ENCODE measurements at regions of chrX and their contacts with region 1.

Region 1: DNA sequence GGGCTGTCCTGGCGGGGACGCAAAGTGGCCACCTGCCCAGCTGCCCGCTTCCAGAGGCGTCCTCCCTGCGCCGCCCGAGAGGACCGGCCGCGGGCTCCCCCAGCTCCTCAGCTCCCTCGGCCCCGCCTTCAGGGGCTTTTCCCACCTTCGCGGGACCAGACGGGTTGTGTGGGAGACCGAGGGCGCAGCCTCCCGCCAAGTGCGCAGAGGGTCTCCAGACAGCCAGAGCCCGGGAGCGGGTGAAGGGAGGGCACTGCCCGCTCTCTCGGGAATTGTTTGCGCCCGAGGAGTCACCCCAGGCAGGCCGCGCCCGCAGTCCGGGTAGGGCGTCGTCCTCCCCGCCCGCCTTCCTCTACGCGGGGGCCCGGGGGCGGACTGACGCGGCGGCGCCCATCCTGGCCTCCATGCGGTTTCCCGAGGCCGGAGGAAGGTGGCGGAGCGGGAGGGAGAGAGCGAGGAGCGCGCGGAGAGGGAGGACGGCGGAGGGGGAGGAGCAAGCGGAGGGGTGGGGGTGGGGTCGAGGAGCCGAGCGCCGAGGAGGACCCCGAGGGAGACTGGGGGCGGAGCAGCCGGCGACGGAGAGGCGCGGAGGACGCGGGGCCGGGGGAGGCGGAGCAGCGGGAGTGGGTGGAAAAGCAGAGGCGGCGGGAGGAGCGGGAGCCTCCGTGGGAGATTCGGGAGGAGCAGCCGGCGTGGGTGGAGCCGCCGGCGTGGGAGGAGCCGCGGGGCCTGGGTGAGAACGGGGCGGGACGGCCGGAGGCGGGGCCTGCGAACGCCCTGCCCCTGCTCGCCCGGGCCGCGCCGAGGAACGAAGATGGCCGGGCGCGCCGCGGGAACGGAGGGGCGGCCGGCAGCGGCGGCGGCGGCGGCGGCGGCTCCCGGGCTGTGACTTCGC is 47.6 kb downstream of the CLDN34 start:
- DNase-seq: peak; percentile 49 to 88 (median 73)
- ATAC-seq: peak; percentile 92
- H3K4me3 ChIP-seq: peak overlapping the region; percentile 49 to 61
- H3K4me3 Mint-ChIP-seq: peak overlapping the region; percentile 71
- H3K27ac ChIP-seq: peak overlapping the region in 1 of 2 experiments; percentile 39
- H3K27ac Mint-ChIP-seq: no peak overlapping the region
- H3K4me1 ChIP-seq: peaks cover 13% of the 10 kb centered on the region
- H3K4me1 Mint-ChIP-seq: peaks cover 34% of the 10 kb centered on the region
- H3K27me3 ChIP-seq: no peaks in the 10 kb centered on the region
- H3K27me3 Mint-ChIP-seq: no peaks in the 10 kb centered on the region
- CTCF ChIP-seq: no peak

Region 2: DNA sequence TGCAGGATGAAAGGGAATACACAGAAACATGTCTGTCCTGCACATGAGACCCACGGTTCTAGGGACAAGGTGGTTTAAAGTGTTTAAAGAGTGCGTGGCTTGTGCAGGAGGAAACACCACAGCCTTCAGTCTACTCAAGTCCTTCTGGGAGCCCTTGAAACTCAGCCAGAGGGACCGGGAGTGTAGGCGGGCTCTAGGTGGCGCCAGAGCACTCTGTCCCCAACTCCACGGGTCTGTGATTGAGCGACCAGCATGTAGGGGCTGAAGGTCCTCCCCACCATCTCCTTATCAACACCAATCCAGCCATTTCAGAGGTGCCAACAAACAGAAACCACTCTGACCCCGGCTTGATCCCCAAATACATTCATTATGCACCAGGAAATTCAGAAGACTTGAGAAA is 129.6 kb before region 1 on chrX:
- CTCF ChIA-PET with region 1: no interaction called
- POLR2A ChIA-PET with region 1: no interaction called
- intact Hi-C with region 1: no loop called
- DNase-seq: peak in 8 of 9 experiments; percentile 2 to 59 (median 33)
- ATAC-seq: no peak
- H3K4me3 ChIP-seq: no peak overlapping the region
- H3K4me3 Mint-ChIP-seq: no peak overlapping the region
- H3K27ac ChIP-seq: no peak overlapping the region
- H3K27ac Mint-ChIP-seq: no peak overlapping the region
- H3K4me1 ChIP-seq: no peaks in the 10 kb centered on the region
- H3K4me1 Mint-ChIP-seq: no peaks in the 10 kb centered on the region
- H3K27me3 ChIP-seq: no peaks in the 10 kb centered on the region
- H3K27me3 Mint-ChIP-seq: peaks cover 5% of the 10 kb centered on the region
- CTCF ChIP-seq: no peak

Region 3: DNA sequence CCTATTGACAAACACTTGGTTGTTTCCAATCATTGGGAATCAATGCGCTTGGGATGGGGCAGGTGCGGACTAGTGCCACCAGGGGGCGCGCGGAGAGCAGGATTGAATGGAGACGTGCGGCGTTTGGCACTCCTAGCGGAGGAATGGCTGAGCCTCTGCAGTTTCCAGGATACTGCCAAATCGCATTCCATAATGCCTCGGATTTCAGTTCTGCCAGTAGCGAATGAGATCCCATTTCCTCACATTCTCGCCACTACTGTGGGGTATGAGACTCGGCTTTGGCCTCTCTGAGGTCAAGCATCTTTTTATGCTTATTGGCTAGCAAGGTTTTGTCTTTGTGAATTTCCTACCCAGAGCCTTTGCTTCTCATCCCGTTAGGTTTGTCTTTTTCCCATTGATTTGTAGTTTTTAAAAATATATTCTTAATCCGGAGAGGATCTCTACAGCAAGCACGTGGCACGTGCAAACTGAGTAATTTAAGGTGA is 18.8 kb before region 1 on chrX:
- CTCF ChIA-PET with region 1: interaction called, 4 read pairs
- POLR2A ChIA-PET with region 1: no interaction called
- intact Hi-C with region 1: loop called in 1 of 2 experiments (anchors 1 kb)
- DNase-seq: peak; percentile 35 to 87 (median 77)
- ATAC-seq: peak; percentile 84
- H3K4me3 ChIP-seq: no peak overlapping the region
- H3K4me3 Mint-ChIP-seq: no peak overlapping the region
- H3K27ac ChIP-seq: no peak overlapping the region
- H3K27ac Mint-ChIP-seq: no peak overlapping the region
- H3K4me1 ChIP-seq: no peaks in the 10 kb centered on the region
- H3K4me1 Mint-ChIP-seq: no peaks in the 10 kb centered on the region
- H3K27me3 ChIP-seq: no peaks in the 10 kb centered on the region
- H3K27me3 Mint-ChIP-seq: no peaks in the 10 kb centered on the region
- CTCF ChIP-seq: peak; percentile 92

Region 4: DNA sequence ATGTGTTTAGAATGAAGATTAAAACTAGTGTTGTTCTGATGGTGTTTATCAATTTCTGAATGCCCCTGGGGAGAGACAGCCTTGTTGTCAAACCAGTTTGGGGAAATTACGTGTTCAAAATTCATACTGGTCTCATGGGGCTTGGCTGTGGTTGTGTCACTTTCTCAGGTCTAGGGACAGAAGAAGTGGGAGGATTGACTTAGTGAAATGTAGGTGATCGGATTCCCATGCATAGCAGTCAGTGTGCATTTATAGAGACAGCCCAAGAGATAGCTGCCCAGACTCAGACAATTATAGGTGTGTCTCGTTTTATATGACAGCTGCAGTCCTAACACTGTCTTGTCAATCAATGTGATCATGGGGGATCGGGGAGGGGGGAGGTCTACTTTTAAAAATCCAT is 47.6 kb after region 1 on chrX:
- CTCF ChIA-PET with region 1: no interaction called
- POLR2A ChIA-PET with region 1: no interaction called
- intact Hi-C with region 1: loop called in 1 of 2 experiments (anchors 5 kb)
- DNase-seq: no peak
- ATAC-seq: no peak
- H3K4me3 ChIP-seq: no peak overlapping the region
- H3K4me3 Mint-ChIP-seq: no peak overlapping the region
- H3K27ac ChIP-seq: no peak overlapping the region
- H3K27ac Mint-ChIP-seq: no peak overlapping the region
- H3K4me1 ChIP-seq: no peaks in the 10 kb centered on the region
- H3K4me1 Mint-ChIP-seq: peaks cover 12% of the 10 kb centered on the region
- H3K27me3 ChIP-seq: no peaks in the 10 kb centered on the region
- H3K27me3 Mint-ChIP-seq: no peaks in the 10 kb centered on the region
- CTCF ChIP-seq: no peak

Region 5: GRCh38 chrX:10098270-10098713 is 83.6 kb after region 1 on chrX:
- CTCF ChIA-PET with region 1: interaction called, 3 read pairs
- POLR2A ChIA-PET with region 1: no interaction called
- intact Hi-C with region 1: loop called in 1 of 2 experiments (anchors 5 kb)
- DNase-seq: peak in 7 of 9 experiments; percentile 29 to 77 (median 55)
- ATAC-seq: peak; percentile 86
- H3K4me3 ChIP-seq: peak overlapping the region; percentile 61 to 76
- H3K4me3 Mint-ChIP-seq: peak overlapping the region; percentile 94
- H3K27ac ChIP-seq: peak overlapping the region; percentile 78 to 83
- H3K27ac Mint-ChIP-seq: peak overlapping the region; percentile 97
- H3K4me1 ChIP-seq: peaks cover 18% of the 10 kb centered on the region
- H3K4me1 Mint-ChIP-seq: peaks cover 55% of the 10 kb centered on the region
- H3K27me3 ChIP-seq: no peaks in the 10 kb centered on the region
- H3K27me3 Mint-ChIP-seq: no peaks in the 10 kb centered on the region
- CTCF ChIP-seq: no peak

Region 6: DNA sequence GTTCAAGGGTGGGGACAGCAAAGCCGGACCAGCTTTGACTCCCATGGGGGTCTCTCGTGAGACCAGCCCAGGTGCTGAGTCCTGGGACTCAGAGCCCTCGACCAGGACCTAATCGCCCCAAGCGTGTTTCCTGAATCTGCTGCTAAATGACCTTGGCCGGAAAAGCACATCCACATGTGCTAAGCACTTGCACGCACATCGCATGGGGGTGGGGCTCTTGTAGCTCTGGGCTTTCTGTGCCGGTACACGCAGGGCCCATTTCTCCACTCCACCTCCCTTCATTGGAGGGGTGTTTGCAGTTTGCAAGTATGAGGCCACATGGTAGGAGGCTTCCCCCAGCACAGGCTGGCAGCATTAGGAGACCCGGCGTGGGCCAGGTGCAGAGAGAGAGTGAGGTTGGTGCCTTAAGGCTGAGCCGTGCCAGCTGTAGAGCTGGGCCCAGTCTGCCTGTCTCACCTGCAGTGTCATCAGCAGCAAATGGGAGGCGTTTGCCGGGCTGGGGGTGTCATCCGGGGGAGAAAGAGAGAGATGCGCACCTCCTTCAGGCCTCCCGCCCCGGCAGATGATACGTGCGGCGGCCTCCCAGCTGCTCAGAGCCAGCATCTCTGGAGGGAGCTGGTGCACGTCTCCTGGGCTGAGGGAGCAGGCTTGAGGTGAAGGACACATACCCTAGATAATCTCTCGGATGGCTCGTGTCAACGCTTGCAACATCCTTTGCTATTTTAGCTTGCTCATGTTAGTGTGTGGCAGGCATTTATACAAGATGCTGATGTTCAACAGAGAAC is 96.8 kb after region 1 on chrX:
- CTCF ChIA-PET with region 1: interaction called, 8 read pairs
- POLR2A ChIA-PET with region 1: interaction called, 7 read pairs
- intact Hi-C with region 1: loop called (anchors 1 to 2 kb)
- DNase-seq: peak; percentile 27 to 84 (median 64)
- ATAC-seq: peak; percentile 69
- H3K4me3 ChIP-seq: peak overlapping the region; percentile 23 to 44
- H3K4me3 Mint-ChIP-seq: peak overlapping the region; percentile 89
- H3K27ac ChIP-seq: peak overlapping the region; percentile 77 to 79
- H3K27ac Mint-ChIP-seq: peak overlapping the region; percentile 100
- H3K4me1 ChIP-seq: peaks cover 63% of the 10 kb centered on the region
- H3K4me1 Mint-ChIP-seq: peaks cover 71% of the 10 kb centered on the region
- H3K27me3 ChIP-seq: no peaks in the 10 kb centered on the region
- H3K27me3 Mint-ChIP-seq: no peaks in the 10 kb centered on the region
- CTCF ChIP-seq: no peak

Region 7: GRCh38 chrX:10467793-10468192 is 453.1 kb after region 1 on chrX:
- CTCF ChIA-PET with region 1: no interaction called
- POLR2A ChIA-PET with region 1: no interaction called
- intact Hi-C with region 1: no loop called
- DNase-seq: no peak
- ATAC-seq: no peak
- H3K4me3 ChIP-seq: no peak overlapping the region
- H3K4me3 Mint-ChIP-seq: no peak overlapping the region
- H3K27ac ChIP-seq: no peak overlapping the region
- H3K27ac Mint-ChIP-seq: no peak overlapping the region
- H3K4me1 ChIP-seq: no peaks in the 10 kb centered on the region
- H3K4me1 Mint-ChIP-seq: no peaks in the 10 kb centered on the region
- H3K27me3 ChIP-seq: no peaks in the 10 kb centered on the region
- H3K27me3 Mint-ChIP-seq: no peaks in the 10 kb centered on the region
- CTCF ChIP-seq: no peak

Region 8: GRCh38 chrX:11111038-11111851 is 1096.5 kb after region 1 on chrX and contains the start of gene HCCS:
- CTCF ChIA-PET with region 1: no interaction called
- POLR2A ChIA-PET with region 1: no interaction called
- intact Hi-C with region 1: loop called (anchors 2 to 10 kb)
- DNase-seq: peak; percentile 67 to 91 (median 84)
- ATAC-seq: peak; percentile 85
- H3K4me3 ChIP-seq: peak within 1 kb of the TSS; percentile 72 to 86
- H3K4me3 Mint-ChIP-seq: peak within 1 kb of the TSS; percentile 95
- H3K27ac ChIP-seq: peak within 1 kb of the TSS; percentile 82 to 95
- H3K27ac Mint-ChIP-seq: peak within 1 kb of the TSS; percentile 99
- H3K4me1 ChIP-seq: peaks cover 15% of the 10 kb centered on the region
- H3K4me1 Mint-ChIP-seq: peaks cover 30% of the 10 kb centered on the region
- H3K27me3 ChIP-seq: no peaks in the 10 kb centered on the region
- H3K27me3 Mint-ChIP-seq: no peaks in the 10 kb centered on the region
- CTCF ChIP-seq: no peak
- total RNA-seq, gene HCCS: 8.3 to 9.1 TPM

Region 9: GRCh38 chrX:11758400-11759171 is 1743.9 kb after region 1 on chrX:
- CTCF ChIA-PET with region 1: no interaction called
- POLR2A ChIA-PET with region 1: no interaction called
- intact Hi-C with region 1: loop called (anchors 5 to 10 kb)
- DNase-seq: peak; percentile 76 to 93 (median 89)
- ATAC-seq: peak; percentile 61
- H3K4me3 ChIP-seq: peak overlapping the region; percentile 76 to 91
- H3K4me3 Mint-ChIP-seq: peak overlapping the region; percentile 88
- H3K27ac ChIP-seq: peak overlapping the region; percentile 87 to 93
- H3K27ac Mint-ChIP-seq: peak overlapping the region; percentile 97
- H3K4me1 ChIP-seq: peaks cover 18% of the 10 kb centered on the region
- H3K4me1 Mint-ChIP-seq: peaks cover 34% of the 10 kb centered on the region
- H3K27me3 ChIP-seq: no peaks in the 10 kb centered on the region
- H3K27me3 Mint-ChIP-seq: no peaks in the 10 kb centered on the region
- CTCF ChIP-seq: peak; percentile 62

Measured in CD8-positive, alpha-beta T cell (primary cell).